ENCODE measurements at regions of chr15 and their contacts with region 1.

Region 1: GRCh38 chr15:31488426-31489204 is 162.0 kb downstream of the KLF13 start:
- DNase-seq: peak; percentile 46 to 68
- ATAC-seq: peak; percentile 70 to 89 (median 80)
- H3K4me3 ChIP-seq: no peak overlapping the region
- H3K27ac ChIP-seq: peak overlapping the region in 4 of 10 donors; percentile 0 to 23 (median 14)
- H3K4me1 ChIP-seq: peaks cover 0 to 26% (median 18%) of the 10 kb centered on the region in 9 donors
- H3K27me3 ChIP-seq: peaks cover 0 to 13% (median 5%) of the 10 kb centered on the region in 7 donors
- CTCF ChIP-seq: peak; percentile 79 to 98 (median 87)

Region 2: DNA sequence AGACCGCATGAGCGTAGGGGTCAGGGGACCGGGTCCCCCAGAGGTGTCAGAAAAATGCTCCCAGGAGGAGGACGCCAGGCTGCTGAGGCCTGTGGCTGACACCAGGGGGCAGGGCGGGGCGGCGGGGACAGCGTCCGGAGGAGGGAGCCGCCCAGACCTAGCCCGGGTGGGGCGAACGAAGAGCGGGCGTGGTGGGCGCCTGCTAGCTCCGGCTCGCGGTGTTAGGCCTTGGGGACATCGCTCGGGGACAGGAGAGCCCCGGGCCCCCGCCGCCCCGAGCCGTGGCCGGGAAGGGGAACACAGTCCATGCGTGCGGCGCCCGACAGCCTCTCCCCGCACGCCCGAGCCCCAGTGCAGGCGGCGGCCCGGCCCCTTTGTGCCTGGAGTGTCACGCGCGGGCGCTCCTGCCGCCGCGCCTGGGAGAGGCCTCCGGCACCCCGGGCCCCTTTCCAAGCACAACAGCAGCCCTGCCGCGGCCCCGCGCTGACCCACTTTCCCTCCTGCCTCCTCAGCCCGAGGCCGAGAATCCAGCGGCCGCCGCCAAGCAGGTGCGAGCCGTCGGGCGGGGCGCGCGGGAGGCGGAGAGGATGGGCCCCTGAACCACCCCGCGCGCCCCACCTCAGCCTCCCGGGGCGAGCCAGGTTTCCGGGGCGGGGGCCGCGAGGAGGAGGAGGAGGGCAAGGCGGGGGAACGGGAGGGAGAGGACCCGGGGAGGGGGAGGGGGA is 273.0 kb before region 1 on chr15:
- intact Hi-C with region 1: loop called in 4 of 10 experiments (anchors 5 kb)
- DNase-seq: peak; percentile 86 to 91
- ATAC-seq: peak; percentile 87 to 95 (median 90)
- H3K4me3 ChIP-seq: peak overlapping the region; percentile 5 to 77 (median 62)
- H3K27ac ChIP-seq: peak overlapping the region; percentile 86 to 99 (median 95)
- H3K4me1 ChIP-seq: peaks cover 6 to 70% (median 44%) of the 10 kb centered on the region in 9 donors
- H3K27me3 ChIP-seq: no peaks in the 10 kb centered on the region
- CTCF ChIP-seq: peak; percentile 86 to 99 (median 92)

Region 3: GRCh38 chr15:31338879-31339557 is 149.6 kb before region 1 on chr15:
- intact Hi-C with region 1: loop called in 1 of 10 experiments (anchors 10 kb)
- DNase-seq: peak; percentile 80 to 88
- ATAC-seq: peak; percentile 43 to 86 (median 80)
- H3K4me3 ChIP-seq: peak overlapping the region in 4 of 10 donors; percentile 5 to 25 (median 15)
- H3K27ac ChIP-seq: peak overlapping the region; percentile 30 to 100 (median 80)
- H3K4me1 ChIP-seq: peaks cover 76 to 99% (median 99%) of the 10 kb centered on the region in 9 donors
- H3K27me3 ChIP-seq: no peaks in the 10 kb centered on the region
- CTCF ChIP-seq: no peak

Region 4: GRCh38 chr15:31391687-31392671 is 96.6 kb before region 1 on chr15:
- intact Hi-C with region 1: loop called in 1 of 10 experiments (anchors 10 kb)
- DNase-seq: peak; percentile 87 to 92
- ATAC-seq: peak; percentile 79 to 87 (median 84)
- H3K4me3 ChIP-seq: peak overlapping the region; percentile 51 to 74 (median 68)
- H3K27ac ChIP-seq: peak overlapping the region; percentile 89 to 99 (median 98)
- H3K4me1 ChIP-seq: peaks cover 0 to 39% (median 28%) of the 10 kb centered on the region in 9 donors
- H3K27me3 ChIP-seq: peaks cover 0 to 11% (median 0%) of the 10 kb centered on the region in 7 donors
- CTCF ChIP-seq: no peak

Region 5: GRCh38 chr15:31499953-31500765 is 11.5 kb after region 1 on chr15:
- intact Hi-C with region 1: no loop called
- DNase-seq: no peak
- ATAC-seq: peak; percentile 40 to 76 (median 58)
- H3K4me3 ChIP-seq: peak overlapping the region in 3 of 10 donors; percentile 8 to 24 (median 16)
- H3K27ac ChIP-seq: peak overlapping the region in 8 of 10 donors; percentile 15 to 59 (median 38)
- H3K4me1 ChIP-seq: peaks cover 0 to 20% (median 15%) of the 10 kb centered on the region in 9 donors
- H3K27me3 ChIP-seq: no peaks in the 10 kb centered on the region
- CTCF ChIP-seq: no peak

Region 6: DNA sequence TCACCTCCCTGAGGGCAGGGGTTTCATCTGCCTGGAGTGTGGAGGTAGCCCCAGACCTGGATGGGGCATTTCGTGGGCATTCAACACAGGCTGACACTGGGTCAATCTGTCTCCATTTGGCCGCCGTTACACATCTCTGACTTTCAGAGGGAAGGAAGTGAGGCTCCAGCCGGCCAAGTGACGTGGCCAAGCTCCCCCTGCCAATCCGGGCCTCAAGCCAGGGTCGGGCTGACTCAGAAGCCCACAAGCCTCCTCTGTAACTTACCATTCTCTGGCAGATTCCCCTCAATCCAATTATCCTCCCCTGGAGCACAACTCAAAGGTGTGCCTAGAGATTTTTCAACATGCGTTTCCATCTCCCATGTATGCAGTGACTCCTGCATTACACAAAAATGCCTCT is 65.6 kb after region 1 on chr15:
- intact Hi-C with region 1: loop called in 1 of 10 experiments (anchors 10 kb)
- DNase-seq: peak; percentile 67 to 72
- ATAC-seq: peak; percentile 60 to 92 (median 83)
- H3K4me3 ChIP-seq: no peak overlapping the region
- H3K27ac ChIP-seq: peak overlapping the region in 8 of 10 donors; percentile 38 to 77 (median 65)
- H3K4me1 ChIP-seq: peaks cover 0 to 22% (median 15%) of the 10 kb centered on the region in 9 donors
- H3K27me3 ChIP-seq: no peaks in the 10 kb centered on the region
- CTCF ChIP-seq: no peak